HEK293 (cell line): ENCODE measurements at regions of chr18 and their contacts with region 1.

Region 1: GRCh38 chr18:45664824-45665763 is 49.8 kb downstream of the SLC14A2 start:
- H3K4me3 ChIP-seq: no peak overlapping the region
- H3K27ac ChIP-seq: no peak overlapping the region
- H3K4me1 ChIP-seq: peaks cover 2% of the 10 kb centered on the region; the same call in 1 of the 2 replicates
- CTCF ChIP-seq: peak; percentile 76

Region 2: DNA sequence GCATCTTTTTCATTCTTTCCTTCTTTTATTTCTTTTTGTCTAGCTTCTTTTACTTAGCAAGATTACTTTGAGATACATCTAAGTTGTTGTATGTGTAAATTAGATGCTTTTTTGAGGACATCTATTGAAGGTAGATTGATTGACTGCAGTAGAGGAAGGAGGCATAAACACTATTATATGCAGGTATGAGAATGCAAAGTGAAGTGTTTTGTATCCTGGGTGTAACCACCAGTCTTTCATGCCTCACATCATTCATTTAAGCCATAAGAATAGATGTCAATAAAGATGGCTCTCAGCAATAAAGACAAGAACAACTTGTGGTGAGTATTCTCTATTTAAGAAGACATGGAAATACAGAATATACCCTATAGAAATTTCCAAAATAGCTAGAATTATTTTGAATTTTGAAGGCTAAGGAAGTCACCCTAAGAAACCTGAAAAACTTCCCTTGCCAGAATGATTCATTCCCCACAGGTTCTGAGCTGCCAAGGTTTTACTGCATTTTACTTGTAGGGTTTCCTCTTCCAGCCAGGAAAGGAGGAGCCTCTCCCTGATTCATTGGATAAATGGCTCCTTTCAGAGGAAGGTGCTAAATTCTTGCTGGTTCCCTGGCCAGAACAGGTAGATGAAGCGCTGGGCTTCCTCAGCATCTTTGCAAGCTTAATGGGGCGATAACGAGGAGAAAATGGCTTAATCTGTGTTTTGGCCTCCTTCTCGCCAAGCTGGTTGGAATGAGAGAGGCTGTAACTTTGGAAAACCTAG is 329.6 kb before region 1 on chr18:
- CTCF ChIA-PET with region 1: no interaction called
- POLR2A ChIA-PET with region 1: no interaction called
- H3K4me3 ChIP-seq: no peak overlapping the region
- H3K27ac ChIP-seq: no peak overlapping the region
- H3K4me1 ChIP-seq: no peaks in the 10 kb centered on the region
- CTCF ChIP-seq: no peak

Region 3: GRCh38 chr18:45402485-45403056 is 262.5 kb before region 1 on chr18:
- CTCF ChIA-PET with region 1: no interaction called
- POLR2A ChIA-PET with region 1: no interaction called
- H3K4me3 ChIP-seq: no peak overlapping the region
- H3K27ac ChIP-seq: no peak overlapping the region
- H3K4me1 ChIP-seq: no peaks in the 10 kb centered on the region
- CTCF ChIP-seq: no peak

Region 4: DNA sequence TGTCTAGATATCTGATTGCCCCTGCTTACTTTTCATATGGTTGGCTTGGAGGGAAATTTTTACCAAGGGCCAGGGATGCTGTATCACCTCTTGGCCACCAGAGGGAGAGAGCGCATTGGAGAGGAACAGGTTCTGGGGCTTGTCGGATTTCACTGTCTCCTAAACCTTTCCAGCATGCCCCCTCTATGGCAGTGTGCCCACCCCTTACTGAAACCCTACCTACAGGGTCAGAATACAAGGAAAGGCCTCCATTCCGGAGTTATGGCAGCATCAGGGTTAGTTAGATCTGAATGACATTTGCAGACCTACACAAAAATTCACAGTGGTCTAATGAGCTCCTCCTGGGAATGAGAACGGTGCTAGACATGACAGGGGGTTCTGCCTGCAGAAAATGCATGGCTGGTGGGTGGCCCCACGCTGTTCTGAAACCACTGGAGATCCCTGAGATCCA is 44.0 kb before region 1 on chr18:
- CTCF ChIA-PET with region 1: interaction called, 23 read pairs
- POLR2A ChIA-PET with region 1: no interaction called
- H3K4me3 ChIP-seq: no peak overlapping the region
- H3K27ac ChIP-seq: no peak overlapping the region
- H3K4me1 ChIP-seq: peaks cover 4% of the 10 kb centered on the region
- CTCF ChIP-seq: peak; percentile 77

Region 5: DNA sequence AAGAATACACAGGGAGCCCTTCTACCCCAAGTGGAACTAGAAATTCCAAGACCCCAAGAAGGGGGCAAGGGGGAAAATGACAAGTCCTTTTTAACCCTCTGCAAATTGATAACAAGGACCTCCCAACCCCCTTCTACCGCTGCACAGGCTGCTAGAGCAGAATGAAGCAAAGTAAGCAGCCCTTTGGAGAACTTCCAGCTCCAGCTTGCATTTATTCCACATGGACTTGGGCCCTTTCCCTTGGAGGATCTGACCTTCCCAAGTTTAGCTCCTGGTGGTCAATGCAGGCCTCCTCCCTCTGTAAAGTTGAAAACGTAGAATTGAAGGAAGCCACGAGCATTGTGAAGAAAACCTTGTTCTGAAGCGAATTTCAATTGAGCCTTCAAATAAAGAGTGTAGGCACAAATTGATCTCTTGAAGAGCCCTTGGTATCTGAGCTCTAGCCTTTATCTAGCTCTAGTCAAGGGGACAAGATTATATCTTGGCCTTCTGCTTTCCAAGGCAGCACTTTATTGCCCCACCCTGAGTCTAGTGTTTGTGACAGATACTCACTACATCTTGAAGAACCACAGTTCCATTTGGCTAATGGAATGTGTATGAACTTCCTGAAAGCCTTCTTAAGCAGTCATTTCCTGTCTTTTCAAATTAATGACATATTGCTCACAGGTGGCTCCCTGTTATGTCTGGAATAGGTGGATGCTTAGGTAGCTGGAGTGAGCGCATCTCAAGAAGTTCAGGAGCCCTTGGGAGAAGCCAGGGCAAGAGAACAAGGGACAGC is 12.6 kb before region 1 on chr18:
- CTCF ChIA-PET with region 1: interaction called, 35 read pairs
- POLR2A ChIA-PET with region 1: no interaction called
- H3K4me3 ChIP-seq: no peak overlapping the region
- H3K27ac ChIP-seq: no peak overlapping the region
- H3K4me1 ChIP-seq: no peaks in the 10 kb centered on the region
- CTCF ChIP-seq: no peak

Region 6: DNA sequence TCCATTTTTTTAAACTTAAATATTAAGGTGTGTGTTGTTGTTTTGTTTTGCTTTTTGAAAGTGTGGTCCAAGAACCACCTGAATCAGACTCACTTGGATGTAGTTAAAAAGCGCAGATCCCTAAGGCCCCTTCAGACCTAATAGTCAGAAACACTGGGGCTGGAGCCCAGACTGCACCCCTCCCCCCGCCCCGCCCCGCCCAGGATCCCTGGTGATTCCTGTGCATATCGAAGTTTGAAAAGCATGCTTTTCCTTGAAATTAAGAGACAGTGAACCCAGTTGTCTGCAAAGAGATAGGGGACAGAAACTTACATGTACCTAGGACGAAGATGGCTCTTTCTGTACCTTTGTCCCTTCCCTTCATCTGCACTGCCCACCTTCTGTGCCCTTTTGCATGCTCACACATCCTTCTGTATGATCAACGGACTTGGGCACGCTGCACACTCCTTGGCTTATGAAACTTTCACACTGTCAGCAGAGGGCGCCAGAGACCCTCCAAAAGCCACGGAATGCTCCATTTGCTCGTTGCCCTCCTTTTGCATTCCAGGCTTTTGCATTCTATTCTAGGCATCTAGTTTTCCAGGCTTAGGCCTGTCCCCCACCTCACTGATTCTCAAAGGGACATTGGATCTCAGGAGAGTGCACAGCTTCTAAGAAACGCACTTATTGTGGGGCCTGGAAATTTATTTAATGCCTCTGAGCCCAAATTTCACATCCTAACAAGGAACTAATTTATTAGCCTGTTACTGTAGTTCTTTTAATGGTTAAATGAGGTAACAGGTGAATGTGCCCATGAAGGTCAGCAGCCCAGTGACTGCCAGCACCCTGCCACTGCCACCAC is 26.1 kb after region 1 on chr18:
- CTCF ChIA-PET with region 1: interaction called, 16 read pairs
- POLR2A ChIA-PET with region 1: no interaction called
- H3K4me3 ChIP-seq: no peak overlapping the region
- H3K27ac ChIP-seq: no peak overlapping the region
- H3K4me1 ChIP-seq: no peaks in the 10 kb centered on the region
- CTCF ChIP-seq: peak; percentile 90

Region 7: DNA sequence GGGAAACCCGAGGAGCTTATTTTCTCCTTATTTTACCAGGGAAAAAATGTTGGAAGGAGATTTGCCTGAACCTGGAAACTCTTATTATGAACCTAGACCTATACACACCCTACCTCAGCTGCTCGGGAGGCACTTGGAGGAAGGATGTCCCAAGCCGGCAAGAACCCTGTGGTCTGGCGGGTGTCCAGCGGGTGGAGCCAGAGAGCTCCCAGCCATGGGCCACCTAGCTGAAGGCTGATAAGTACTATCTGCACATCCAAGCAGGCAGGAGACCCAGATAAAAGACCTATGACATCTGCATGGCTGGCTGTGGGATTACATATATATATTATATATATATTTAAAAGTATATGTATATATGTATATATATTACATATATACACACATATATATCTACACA is 57.8 kb after region 1 on chr18:
- CTCF ChIA-PET with region 1: interaction called, 12 read pairs
- POLR2A ChIA-PET with region 1: no interaction called
- H3K4me3 ChIP-seq: no peak overlapping the region
- H3K27ac ChIP-seq: no peak overlapping the region
- H3K4me1 ChIP-seq: no peaks in the 10 kb centered on the region
- CTCF ChIP-seq: no peak

Region 8: DNA sequence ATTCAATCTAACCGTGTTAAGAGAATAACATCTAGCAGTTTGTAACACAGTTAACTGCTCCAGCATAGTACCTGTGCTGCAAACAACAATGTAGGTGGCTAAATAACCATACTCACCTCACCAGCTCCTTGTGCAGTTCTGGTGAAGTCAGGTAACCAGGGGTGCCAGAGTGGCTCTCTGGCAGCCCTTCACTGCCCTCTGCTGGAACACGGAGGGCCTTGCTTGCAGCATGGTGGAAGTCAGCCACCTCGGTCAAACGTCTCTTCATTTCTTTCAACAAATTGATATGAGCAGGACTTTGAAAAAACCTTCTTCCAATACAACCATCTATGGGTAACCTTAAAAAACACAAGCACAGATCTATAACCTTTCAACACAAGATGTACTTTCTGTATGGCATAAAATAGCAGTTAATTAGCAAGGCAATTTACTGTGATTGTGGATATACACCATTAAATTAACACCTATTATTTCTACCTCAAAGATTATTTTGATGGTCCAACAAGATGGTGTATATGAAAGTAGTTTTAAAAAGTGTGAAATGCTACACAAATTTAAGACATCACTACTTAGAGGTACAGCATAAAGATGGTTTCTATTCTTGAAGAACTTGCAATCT is 245.4 kb after region 1 on chr18:
- CTCF ChIA-PET with region 1: interaction called, 21 read pairs
- POLR2A ChIA-PET with region 1: interaction called, 3 read pairs
- H3K4me3 ChIP-seq: no peak overlapping the region
- H3K27ac ChIP-seq: no peak overlapping the region
- H3K4me1 ChIP-seq: no peaks in the 10 kb centered on the region
- CTCF ChIP-seq: peak; percentile 69

Region 9: GRCh38 chr18:45974088-45974536 is 309.0 kb after region 1 on chr18:
- CTCF ChIA-PET with region 1: interaction called, 23 read pairs
- POLR2A ChIA-PET with region 1: no interaction called
- H3K4me3 ChIP-seq: no peak overlapping the region
- H3K27ac ChIP-seq: no peak overlapping the region
- H3K4me1 ChIP-seq: no peaks in the 10 kb centered on the region
- CTCF ChIP-seq: peak; percentile 62

Region 10: DNA sequence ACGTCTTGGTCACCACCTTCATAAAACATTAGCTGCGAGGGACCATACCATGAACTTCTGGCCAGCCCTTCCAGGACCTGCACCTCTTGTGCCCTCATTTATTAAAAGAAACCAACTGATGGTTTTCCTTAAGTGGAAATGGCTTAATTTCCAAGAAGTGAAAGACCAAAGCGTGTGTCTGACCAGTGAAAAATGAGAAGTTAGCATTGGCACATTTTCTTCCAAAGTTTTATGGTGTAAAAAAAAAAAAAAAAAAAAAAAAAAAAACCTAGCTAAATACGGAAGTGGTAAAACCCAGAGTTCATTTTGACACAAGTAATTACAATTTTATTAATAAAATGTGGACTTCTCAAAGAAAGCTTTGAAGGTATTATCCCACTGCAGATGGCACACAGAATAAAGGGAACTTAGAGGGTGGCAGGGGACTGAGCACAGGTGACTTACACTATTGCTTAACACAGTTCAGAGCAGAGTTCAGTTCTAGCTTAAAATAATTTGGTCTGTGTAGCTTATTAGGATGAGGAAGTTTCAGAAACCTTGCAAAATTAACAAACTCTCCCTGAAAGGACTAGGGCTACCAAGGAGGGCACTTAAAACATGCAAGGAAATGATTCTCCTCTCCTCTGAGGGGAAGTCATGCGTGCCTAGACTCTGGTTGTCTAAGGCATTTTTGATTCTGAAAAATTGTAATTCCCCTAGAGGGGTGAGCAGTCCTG is 344.2 kb after region 1 on chr18:
- CTCF ChIA-PET with region 1: no interaction called
- POLR2A ChIA-PET with region 1: no interaction called
- H3K4me3 ChIP-seq: no peak overlapping the region
- H3K27ac ChIP-seq: no peak overlapping the region
- H3K4me1 ChIP-seq: no peaks in the 10 kb centered on the region
- CTCF ChIP-seq: no peak